Activated CD4-positive, alpha-beta T cell treated with anti-CD3 and anti-CD28 coated beads for 36 hours (primary cell): ENCODE measurements at regions of chr5 and their contacts with region 1.

Region 1: DNA sequence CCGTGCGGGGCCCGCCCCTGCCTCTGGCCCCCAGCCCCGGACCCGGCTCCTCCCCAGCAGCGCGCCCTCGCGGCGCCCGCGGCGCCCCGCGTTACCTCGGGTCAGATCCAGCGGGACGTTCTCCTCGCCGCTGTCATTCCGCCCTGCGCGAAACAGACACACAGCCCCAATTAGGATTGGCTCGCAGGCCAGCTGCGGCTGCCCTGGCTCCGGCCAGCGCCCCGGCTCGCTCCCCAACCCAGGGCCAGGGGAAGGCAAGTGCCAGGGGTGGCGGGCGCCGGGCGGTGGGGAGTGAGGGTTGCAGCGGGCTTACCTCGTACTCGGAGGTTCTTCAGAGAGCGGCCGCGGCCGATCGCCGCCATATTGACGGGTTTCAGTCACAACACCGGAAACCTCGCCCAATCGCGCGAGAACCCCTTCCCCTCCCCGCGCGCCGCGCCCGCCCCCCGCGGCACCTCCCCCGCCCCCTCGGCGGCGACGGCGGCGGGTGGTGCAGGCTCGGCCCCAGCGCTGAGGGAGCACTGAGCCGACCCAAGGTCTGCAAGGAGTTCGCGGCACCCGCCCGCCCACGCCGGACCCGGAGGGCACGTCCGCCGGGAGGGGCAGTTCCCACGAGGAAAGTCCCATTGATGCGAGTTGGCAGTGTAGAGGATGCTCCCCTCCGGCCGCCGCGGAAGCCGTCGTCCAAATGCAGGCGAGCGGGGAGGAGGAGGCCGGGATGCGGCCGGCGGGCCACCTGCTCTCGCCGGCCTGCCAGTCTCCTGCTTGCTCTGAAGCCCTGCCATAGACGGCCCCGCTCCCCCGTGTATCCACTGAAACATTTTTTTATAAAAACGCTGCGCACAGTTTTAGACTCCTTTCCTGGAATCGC is at the start of gene RICTOR:
- DNase-seq: peak; percentile 97
- ATAC-seq: peak; percentile 84
- H3K4me3 Mint-ChIP-seq: peak within 1 kb of the TSS; percentile 96
- H3K27ac Mint-ChIP-seq: peak within 1 kb of the TSS; percentile 99
- H3K4me1 Mint-ChIP-seq: peaks cover 40% of the 10 kb centered on the region
- H3K27me3 Mint-ChIP-seq: peaks cover 7% of the 10 kb centered on the region
- total RNA-seq, gene RICTOR: 23.2 to 28.5 TPM

Region 2: GRCh38 chr5:38845526-38846378 is 228.5 kb before region 1 on chr5 and contains the start of gene OSMR:
- CTCF ChIA-PET with region 1: no interaction called
- POLR2A ChIA-PET with region 1: no interaction called
- intact Hi-C with region 1: loop called in 1 of 2 experiments (anchors 5 kb)
- DNase-seq: peak; percentile 72
- ATAC-seq: peak; percentile 74
- H3K4me3 Mint-ChIP-seq: peak within 1 kb of the TSS; percentile 70
- H3K27ac Mint-ChIP-seq: peak within 1 kb of the TSS; percentile 61
- H3K4me1 Mint-ChIP-seq: peaks cover 8% of the 10 kb centered on the region
- H3K27me3 Mint-ChIP-seq: peaks cover 48% of the 10 kb centered on the region
- total RNA-seq, gene OSMR: 0.25 to 0.26 TPM

Region 3: GRCh38 chr5:39062530-39062929 is 11.7 kb before region 1 on chr5:
- CTCF ChIA-PET with region 1: interaction called, 12 read pairs
- POLR2A ChIA-PET with region 1: no interaction called
- intact Hi-C with region 1: no loop called
- DNase-seq: no peak
- ATAC-seq: no peak
- H3K4me3 Mint-ChIP-seq: no peak overlapping the region
- H3K27ac Mint-ChIP-seq: no peak overlapping the region
- H3K4me1 Mint-ChIP-seq: peaks cover 70% of the 10 kb centered on the region
- H3K27me3 Mint-ChIP-seq: no peaks in the 10 kb centered on the region

Region 4: GRCh38 chr5:39202597-39203274 is 128.5 kb after region 1 on chr5:
- CTCF ChIA-PET with region 1: no interaction called
- POLR2A ChIA-PET with region 1: no interaction called
- intact Hi-C with region 1: loop called in 1 of 2 experiments (anchors 1 kb)
- DNase-seq: peak; percentile 62
- ATAC-seq: peak; percentile 27
- H3K4me3 Mint-ChIP-seq: peak overlapping the region; percentile 81
- H3K27ac Mint-ChIP-seq: peak overlapping the region; percentile 93
- H3K4me1 Mint-ChIP-seq: peaks cover 36% of the 10 kb centered on the region
- H3K27me3 Mint-ChIP-seq: no peaks in the 10 kb centered on the region

Region 5: GRCh38 chr5:39274398-39275085 is 200.3 kb after region 1 on chr5:
- CTCF ChIA-PET with region 1: no interaction called
- POLR2A ChIA-PET with region 1: interaction called, 3 read pairs
- intact Hi-C with region 1: loop called in 1 of 2 experiments (anchors 2 kb)
- DNase-seq: no peak
- ATAC-seq: peak; percentile 62
- H3K4me3 Mint-ChIP-seq: peak overlapping the region; percentile 77
- H3K27ac Mint-ChIP-seq: peak overlapping the region; percentile 98
- H3K4me1 Mint-ChIP-seq: peaks cover 48% of the 10 kb centered on the region
- H3K27me3 Mint-ChIP-seq: no peaks in the 10 kb centered on the region

Region 6: GRCh38 chr5:39424736-39425637 is 350.7 kb after region 1 on chr5 and contains the start of gene DAB2:
- CTCF ChIA-PET with region 1: no interaction called
- POLR2A ChIA-PET with region 1: no interaction called
- intact Hi-C with region 1: no loop called
- DNase-seq: peak; percentile 70
- ATAC-seq: peak; percentile 88
- H3K4me3 Mint-ChIP-seq: peak within 1 kb of the TSS; percentile 68
- H3K27ac Mint-ChIP-seq: no peak within 1 kb of the TSS
- H3K4me1 Mint-ChIP-seq: no peaks in the 10 kb centered on the region
- H3K27me3 Mint-ChIP-seq: peaks cover 42% of the 10 kb centered on the region
- total RNA-seq, gene DAB2: 0.05 to 0.26 TPM

Region 7: GRCh38 chr5:40404613-40405012 is 1330.4 kb after region 1 on chr5:
- CTCF ChIA-PET with region 1: no interaction called
- POLR2A ChIA-PET with region 1: no interaction called
- intact Hi-C with region 1: loop called in 1 of 2 experiments (anchors 10 kb)
- DNase-seq: no peak
- ATAC-seq: peak; percentile 28
- H3K4me3 Mint-ChIP-seq: peak overlapping the region; percentile 18
- H3K27ac Mint-ChIP-seq: peak overlapping the region; percentile 99
- H3K4me1 Mint-ChIP-seq: peaks cover 94% of the 10 kb centered on the region
- H3K27me3 Mint-ChIP-seq: no peaks in the 10 kb centered on the region